Calu3 (cell line): ENCODE measurements at regions of chr18 and their contacts with region 1.

Region 1: DNA sequence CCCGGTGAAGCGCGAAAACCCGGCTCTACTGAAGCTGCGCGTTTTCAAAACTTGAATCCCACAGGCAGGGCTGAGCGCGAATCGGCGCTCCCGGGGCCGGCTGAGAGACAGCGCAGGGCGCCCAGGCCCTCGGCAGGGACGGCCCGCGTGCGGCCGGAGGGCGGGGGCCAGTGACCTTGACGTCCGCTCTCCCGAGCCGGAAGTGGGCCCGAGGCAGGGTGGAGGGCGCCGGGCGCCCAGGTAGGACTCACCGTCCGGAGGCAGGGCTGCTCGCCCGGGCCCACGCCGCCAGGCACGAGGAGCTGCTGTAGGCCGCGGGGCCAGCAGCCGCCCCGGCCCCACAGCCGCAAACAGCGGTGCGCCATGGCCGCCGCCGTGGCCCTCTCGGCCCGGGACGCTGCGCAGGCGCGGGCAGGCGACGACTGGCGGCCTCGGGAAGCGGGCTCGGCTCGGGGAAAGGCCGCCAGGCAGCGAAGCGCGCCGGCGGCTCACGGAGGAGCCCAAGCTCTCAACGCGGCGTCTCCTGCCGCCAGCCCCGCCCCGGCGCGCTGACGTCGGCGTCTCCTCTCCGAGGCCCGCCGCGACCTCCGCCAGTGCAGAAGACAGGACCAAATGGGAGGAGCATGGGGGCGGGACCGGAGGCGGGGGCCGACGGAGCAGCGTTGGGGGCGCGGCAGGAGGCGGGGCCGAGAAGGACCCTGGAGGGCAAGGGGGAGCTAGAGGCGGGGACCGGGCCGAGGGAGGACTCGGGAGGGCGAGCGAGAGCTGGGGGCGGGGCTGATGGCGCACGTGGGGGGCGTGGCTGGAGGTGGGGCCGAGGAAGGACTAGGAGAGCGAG is at the start of gene AFG3L2:
- DNase-seq: peak; percentile 100
- H3K4me3 Mint-ChIP-seq: peak within 1 kb of the TSS; percentile 89
- H3K27ac Mint-ChIP-seq: peak within 1 kb of the TSS; percentile 92
- H3K4me1 Mint-ChIP-seq: peaks cover 38% of the 10 kb centered on the region
- H3K27me3 Mint-ChIP-seq: no peaks in the 10 kb centered on the region
- CTCF ChIP-seq: no peak
- total RNA-seq, gene AFG3L2: 55.1 and 59.2 TPM in 2 replicates

Region 2: GRCh38 chr18:12449051-12449785 is 72.3 kb after region 1 on chr18:
- CTCF ChIA-PET with region 1: no interaction called
- intact Hi-C with region 1: no loop called
- DNase-seq: no peak
- H3K4me3 Mint-ChIP-seq: no peak overlapping the region
- H3K27ac Mint-ChIP-seq: no peak overlapping the region
- H3K4me1 Mint-ChIP-seq: no peaks in the 10 kb centered on the region
- H3K27me3 Mint-ChIP-seq: no peaks in the 10 kb centered on the region
- CTCF ChIP-seq: no peak

Region 3: GRCh38 chr18:12779043-12779442 is 402.1 kb after region 1 on chr18:
- CTCF ChIA-PET with region 1: no interaction called
- intact Hi-C with region 1: no loop called
- DNase-seq: no peak
- H3K4me3 Mint-ChIP-seq: no peak overlapping the region
- H3K27ac Mint-ChIP-seq: no peak overlapping the region
- H3K4me1 Mint-ChIP-seq: no peaks in the 10 kb centered on the region
- H3K27me3 Mint-ChIP-seq: no peaks in the 10 kb centered on the region
- CTCF ChIP-seq: no peak

Region 4: GRCh38 chr18:12947355-12948041 is 570.6 kb after region 1 on chr18 and contains the start of gene SEH1L:
- CTCF ChIA-PET with region 1: no interaction called
- intact Hi-C with region 1: loop called (anchors 5 kb)
- DNase-seq: peak; percentile 99
- H3K4me3 Mint-ChIP-seq: peak within 1 kb of the TSS; percentile 89
- H3K27ac Mint-ChIP-seq: peak within 1 kb of the TSS; percentile 75
- H3K4me1 Mint-ChIP-seq: peaks cover 17% of the 10 kb centered on the region
- H3K27me3 Mint-ChIP-seq: no peaks in the 10 kb centered on the region
- CTCF ChIP-seq: no peak
- total RNA-seq, gene SEH1L: 52.3 and 61.2 TPM in 2 replicates